ENCODE measurements at regions of chr12 and their contacts with region 1.

Region 1: DNA sequence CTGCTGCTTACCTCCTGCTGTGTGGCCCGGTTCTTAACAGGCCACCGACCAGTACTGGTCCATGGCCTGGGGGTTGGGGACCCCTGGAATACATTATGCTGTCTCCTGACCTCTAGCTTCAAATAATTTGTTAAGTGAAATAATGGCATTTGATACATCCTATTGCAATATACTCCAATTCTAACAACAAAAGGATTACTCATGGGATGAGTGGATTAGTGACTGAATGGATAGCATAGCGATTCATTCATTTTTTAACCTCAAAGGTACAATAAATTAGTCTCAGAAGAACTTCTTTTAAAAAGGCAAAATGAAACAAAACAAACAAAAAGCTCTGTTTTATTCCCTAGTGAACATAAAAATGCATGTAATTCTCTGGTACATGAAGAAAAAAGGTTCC is 147.9 kb upstream of the PKP2 start:
- DNase-seq: no peak
- H3K4me3 ChIP-seq: no peak overlapping the region
- H3K27ac ChIP-seq: no peak overlapping the region
- H3K4me1 ChIP-seq: no peaks in the 10 kb centered on the region
- H3K27me3 ChIP-seq: no peaks in the 10 kb centered on the region
- CTCF ChIP-seq: no peak
- POLR2A ChIP-seq: no peak

Region 2: DNA sequence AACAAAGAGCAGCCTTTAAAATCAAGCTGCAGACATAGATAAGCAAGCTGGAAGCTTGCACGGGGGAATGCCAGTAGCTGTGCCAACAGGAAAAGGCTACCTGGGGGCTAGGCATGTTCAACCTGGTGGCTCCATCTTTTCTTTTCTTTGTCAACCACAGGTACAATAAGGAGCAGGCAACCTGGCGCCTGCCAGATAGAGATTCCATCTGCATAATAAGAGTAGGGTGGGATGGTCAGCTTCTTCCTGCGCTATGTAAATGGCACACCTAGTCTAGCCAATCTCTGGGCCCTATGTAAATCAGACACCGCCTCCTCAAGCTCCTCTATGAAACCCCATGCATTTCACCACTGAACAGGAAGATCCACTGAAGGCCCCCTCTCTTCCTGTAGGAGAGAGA is 60.5 kb before region 1 on chr12:
- intact Hi-C with region 1: loop called (anchors 10 kb)
- DNase-seq: no peak
- H3K4me3 ChIP-seq: no peak overlapping the region
- H3K27ac ChIP-seq: no peak overlapping the region
- H3K4me1 ChIP-seq: no peaks in the 10 kb centered on the region
- H3K27me3 ChIP-seq: no peaks in the 10 kb centered on the region
- CTCF ChIP-seq: no peak
- POLR2A ChIP-seq: no peak

Measured in uterus (tissue), 4 donors.